Activated CD4-positive, alpha-beta T cell treated with anti-CD3 and anti-CD28 coated beads, Interleukin-2, amount 10 ng/mL, durations not matched to agents 7 days and 5 days (primary cell): ENCODE measurements at regions of chr20 and their contacts with region 1.

Region 1: GRCh38 chr20:39049684-39050554 is 87.8 kb downstream of the DHX35 start:
- DNase-seq: peak; percentile 78
- H3K4me3 Mint-ChIP-seq: peak overlapping the region; percentile 73
- H3K27ac Mint-ChIP-seq: peak overlapping the region; percentile 78
- H3K4me1 Mint-ChIP-seq: peaks cover 14% of the 10 kb centered on the region
- H3K27me3 Mint-ChIP-seq: peaks cover 3% of the 10 kb centered on the region

Region 2: DNA sequence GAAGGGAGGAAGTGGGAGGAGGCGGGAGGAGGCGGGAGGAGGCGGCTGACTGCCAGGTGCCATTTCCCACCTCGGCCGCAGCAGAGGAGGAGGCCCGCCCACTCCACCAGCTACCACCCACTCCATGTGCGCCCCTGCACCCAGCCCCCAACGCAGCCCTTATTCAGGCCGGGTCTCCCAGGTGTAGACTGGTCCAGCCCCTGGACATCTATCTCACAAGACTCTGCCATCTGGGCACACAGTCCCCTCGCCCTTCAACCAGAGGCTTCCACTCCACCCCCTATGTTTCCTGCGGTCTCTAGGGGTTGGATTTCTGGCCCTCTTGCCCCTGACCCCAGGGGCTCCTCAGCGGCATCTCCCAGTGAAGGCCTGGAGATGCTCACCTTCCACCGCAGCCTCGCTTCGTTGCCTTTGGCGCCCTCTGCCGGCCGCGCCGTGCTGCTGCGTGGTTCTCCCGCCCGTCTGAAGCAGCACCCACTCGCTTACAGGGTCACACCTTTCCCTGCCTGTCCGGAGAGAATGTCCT is 156.3 kb before region 1 on chr20:
- CTCF ChIA-PET with region 1: no interaction called
- POLR2A ChIA-PET with region 1: no interaction called
- DNase-seq: peak; percentile 74
- H3K4me3 Mint-ChIP-seq: peak overlapping the region; percentile 12
- H3K27ac Mint-ChIP-seq: peak overlapping the region; percentile 81
- H3K4me1 Mint-ChIP-seq: peaks cover 45% of the 10 kb centered on the region
- H3K27me3 Mint-ChIP-seq: no peaks in the 10 kb centered on the region

Region 3: DNA sequence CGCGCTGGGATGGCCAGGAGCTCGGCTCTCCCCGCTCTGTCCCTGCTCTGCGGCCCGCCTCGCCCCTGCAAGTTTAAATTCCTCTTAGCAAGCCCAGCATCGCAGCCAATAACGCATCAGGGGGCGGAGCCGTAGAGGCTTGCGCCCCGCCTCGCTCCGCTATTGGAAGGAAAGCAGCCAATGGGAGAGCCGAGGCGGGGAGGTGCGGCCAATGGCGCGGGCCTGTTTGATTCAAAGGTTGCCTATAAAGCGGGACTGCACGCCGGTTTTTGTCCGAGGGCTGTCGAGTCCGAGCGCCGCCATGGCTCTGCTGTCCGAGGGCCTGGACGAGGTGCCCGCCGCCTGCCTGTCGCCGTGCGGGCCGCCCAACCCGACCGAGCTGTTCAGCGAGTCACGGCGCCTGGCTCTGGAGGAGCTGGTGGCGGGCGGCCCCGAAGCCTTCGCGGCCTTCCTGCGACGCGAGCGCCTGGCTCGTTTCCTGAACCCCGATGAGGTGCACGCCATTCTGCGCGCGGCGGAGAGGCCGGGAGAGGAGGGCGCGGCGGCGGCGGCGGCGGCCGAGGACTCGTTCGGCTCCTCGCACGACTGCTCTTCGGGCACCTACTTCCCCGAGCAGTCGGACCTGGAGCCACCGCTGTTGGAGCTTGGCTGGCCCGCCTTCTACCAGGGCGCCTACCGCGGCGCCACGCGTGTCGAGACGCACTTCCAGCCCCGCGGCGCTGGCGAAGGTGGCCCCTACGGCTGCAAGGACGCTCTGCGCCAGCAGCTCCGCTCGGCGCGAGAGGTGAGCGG is 123.6 kb before region 1 on chr20 and contains the start of gene FAM83D:
- CTCF ChIA-PET with region 1: interaction called, 41 read pairs
- POLR2A ChIA-PET with region 1: no interaction called
- DNase-seq: peak; percentile 97
- H3K4me3 Mint-ChIP-seq: peak within 1 kb of the TSS; percentile 88
- H3K27ac Mint-ChIP-seq: peak within 1 kb of the TSS; percentile 88
- H3K4me1 Mint-ChIP-seq: peaks cover 44% of the 10 kb centered on the region
- H3K27me3 Mint-ChIP-seq: no peaks in the 10 kb centered on the region
- total RNA-seq, gene FAM83D: 22.5 to 22.6 TPM

Region 4: DNA sequence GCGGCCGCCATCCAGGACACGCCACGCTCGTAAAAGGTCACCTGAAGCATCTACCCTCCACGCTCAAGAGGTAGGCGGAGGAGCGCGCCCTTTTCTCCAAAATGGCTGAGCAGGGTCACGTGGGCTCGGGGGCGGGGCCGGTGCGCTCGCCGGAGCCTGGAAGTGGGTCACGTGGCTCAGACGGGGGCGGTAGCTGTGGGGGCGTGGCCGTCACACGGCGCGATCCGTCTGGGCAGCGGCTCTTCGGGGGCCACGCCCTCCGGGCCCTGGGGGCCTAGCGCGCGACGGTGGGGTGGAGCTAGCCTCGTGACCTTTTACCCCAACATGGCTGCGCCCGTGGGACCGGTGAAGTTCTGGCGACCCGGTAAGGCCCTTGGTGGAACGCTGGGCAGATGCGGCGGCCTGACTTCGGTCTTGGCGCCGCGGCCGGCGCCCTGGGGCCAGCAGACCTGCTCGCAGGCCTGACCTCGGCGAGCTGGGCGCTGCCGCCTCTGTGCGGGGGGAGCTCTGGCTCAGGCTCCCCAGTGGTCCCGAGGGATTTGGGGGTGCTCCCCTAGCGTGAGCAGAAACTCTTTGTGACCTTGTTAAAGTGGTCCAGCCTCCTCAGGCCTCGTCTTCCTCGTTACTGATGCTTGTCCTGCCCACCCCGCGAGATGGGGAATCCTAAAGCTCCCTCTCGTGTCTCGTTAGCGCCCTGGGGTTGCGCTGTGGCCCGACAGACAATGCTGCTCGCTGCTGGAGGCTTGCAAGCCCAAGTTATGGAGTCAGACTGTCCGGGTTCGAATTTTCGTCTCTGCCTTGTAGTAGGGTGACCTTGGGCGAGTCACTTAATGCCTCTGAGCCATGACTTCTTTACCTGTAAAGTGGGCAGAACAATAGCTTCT is 87.6 kb before region 1 on chr20 and contains the start of gene DHX35:
- CTCF ChIA-PET with region 1: interaction called, 17 read pairs
- POLR2A ChIA-PET with region 1: no interaction called
- DNase-seq: peak; percentile 97
- H3K4me3 Mint-ChIP-seq: peak within 1 kb of the TSS; percentile 80
- H3K27ac Mint-ChIP-seq: peak within 1 kb of the TSS; percentile 94
- H3K4me1 Mint-ChIP-seq: peaks cover 31% of the 10 kb centered on the region
- H3K27me3 Mint-ChIP-seq: no peaks in the 10 kb centered on the region
- total RNA-seq, gene DHX35: 8.8 to 10.3 TPM

Region 5: GRCh38 chr20:39016041-39016440 is 33.9 kb before region 1 on chr20:
- CTCF ChIA-PET with region 1: no interaction called
- POLR2A ChIA-PET with region 1: no interaction called
- DNase-seq: no peak
- H3K4me3 Mint-ChIP-seq: no peak overlapping the region
- H3K27ac Mint-ChIP-seq: no peak overlapping the region
- H3K4me1 Mint-ChIP-seq: peaks cover 33% of the 10 kb centered on the region
- H3K27me3 Mint-ChIP-seq: no peaks in the 10 kb centered on the region

Region 6: GRCh38 chr20:39070484-39071231 is 20.7 kb after region 1 on chr20:
- CTCF ChIA-PET with region 1: interaction called, 15 read pairs
- POLR2A ChIA-PET with region 1: no interaction called
- DNase-seq: no peak
- H3K4me3 Mint-ChIP-seq: no peak overlapping the region
- H3K27ac Mint-ChIP-seq: no peak overlapping the region
- H3K4me1 Mint-ChIP-seq: no peaks in the 10 kb centered on the region
- H3K27me3 Mint-ChIP-seq: peaks cover 17% of the 10 kb centered on the region

Region 7: GRCh38 chr20:39075731-39076130 is 25.8 kb after region 1 on chr20:
- CTCF ChIA-PET with region 1: interaction called, 32 read pairs
- POLR2A ChIA-PET with region 1: no interaction called
- DNase-seq: no peak
- H3K4me3 Mint-ChIP-seq: no peak overlapping the region
- H3K27ac Mint-ChIP-seq: no peak overlapping the region
- H3K4me1 Mint-ChIP-seq: peaks cover 6% of the 10 kb centered on the region
- H3K27me3 Mint-ChIP-seq: peaks cover 29% of the 10 kb centered on the region

Region 8: DNA sequence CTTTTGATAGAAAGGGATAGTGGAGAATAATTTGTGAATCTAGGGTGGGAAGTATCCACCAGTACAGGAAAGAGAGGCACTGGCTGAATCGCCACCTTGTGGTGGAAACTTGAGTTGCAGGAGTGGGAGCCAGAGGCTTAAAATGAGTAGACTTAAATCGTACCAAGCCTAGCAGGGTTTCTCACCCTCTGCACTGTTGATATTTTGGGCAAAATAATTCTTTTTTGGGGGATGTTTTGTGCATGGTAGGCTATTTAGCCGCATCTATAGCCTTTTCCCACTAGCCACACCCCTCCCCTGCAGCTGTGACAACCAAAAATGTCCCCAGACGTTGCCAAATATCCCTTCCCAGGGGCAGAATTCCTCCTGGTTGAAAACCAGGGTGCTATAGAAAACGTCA is 31.3 kb after region 1 on chr20:
- CTCF ChIA-PET with region 1: interaction called, 32 read pairs
- POLR2A ChIA-PET with region 1: no interaction called
- DNase-seq: peak; percentile 87
- H3K4me3 Mint-ChIP-seq: no peak overlapping the region
- H3K27ac Mint-ChIP-seq: no peak overlapping the region
- H3K4me1 Mint-ChIP-seq: peaks cover 6% of the 10 kb centered on the region
- H3K27me3 Mint-ChIP-seq: peaks cover 29% of the 10 kb centered on the region